Ascending aorta (tissue), 2 donors: ENCODE measurements at regions of chr10 and their contacts with region 1.

Region 1: DNA sequence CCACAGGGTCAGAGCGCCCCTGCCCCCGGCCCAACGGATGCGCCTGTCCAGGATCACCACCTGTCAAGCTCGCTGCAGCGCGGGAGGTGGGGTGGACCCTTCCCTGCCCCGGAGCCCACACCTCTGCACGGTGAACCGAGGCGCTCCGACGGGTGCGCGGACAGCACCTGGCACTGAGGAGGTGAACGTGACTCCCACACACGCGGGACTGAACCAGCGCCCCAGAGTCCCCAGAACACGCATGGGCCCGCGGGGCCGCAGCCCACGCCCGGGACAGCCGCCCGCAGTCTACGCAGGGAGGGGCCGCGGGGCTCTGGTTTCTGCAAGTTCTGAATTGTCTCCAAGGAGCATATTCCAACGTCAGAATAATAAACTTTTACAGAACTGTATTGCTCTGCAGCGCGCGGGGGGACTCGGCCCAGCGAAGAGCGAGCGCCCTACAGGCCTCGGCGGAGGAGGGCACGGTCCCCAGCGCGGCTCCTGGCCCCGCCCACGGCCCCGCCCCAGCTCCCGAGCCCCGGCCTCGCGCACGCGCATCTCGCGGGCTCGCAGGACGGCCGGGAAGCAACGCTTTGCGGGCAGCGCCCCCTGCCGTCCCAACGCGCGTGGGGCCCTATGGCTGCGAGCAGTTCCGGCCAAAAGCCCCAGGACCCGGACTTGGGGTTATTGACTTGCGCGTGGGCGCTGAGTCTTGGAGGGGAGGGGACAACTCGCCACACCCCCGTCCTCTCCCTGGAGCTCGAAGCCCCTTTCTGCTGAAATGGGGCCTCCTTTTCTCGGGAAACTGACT is 29.7 kb downstream of the OAT start:
- DNase-seq: peak; percentile 51 to 93
- H3K4me3 ChIP-seq: peak overlapping the region; percentile 51 to 61
- H3K27ac ChIP-seq: no peak overlapping the region
- H3K4me1 ChIP-seq: peaks cover 4 to 17% of the 10 kb centered on the region in 2 donors
- H3K27me3 ChIP-seq: no peaks in the 10 kb centered on the region
- CTCF ChIP-seq: peak; percentile 84 to 97 (median 91)

Region 2: GRCh38 chr10:123582084-123582989 is 806.7 kb before region 1 on chr10:
- intact Hi-C with region 1: loop called (anchors 10 kb)
- DNase-seq: peak; percentile 39 to 86
- H3K4me3 ChIP-seq: no peak overlapping the region
- H3K27ac ChIP-seq: no peak overlapping the region
- H3K4me1 ChIP-seq: peaks cover 3 to 10% of the 10 kb centered on the region in 2 donors
- H3K27me3 ChIP-seq: no peaks in the 10 kb centered on the region
- CTCF ChIP-seq: peak; percentile 73 to 90 (median 85)

Region 3: GRCh38 chr10:123721430-123722257 is 667.4 kb before region 1 on chr10:
- intact Hi-C with region 1: no loop called
- DNase-seq: no peak
- H3K4me3 ChIP-seq: no peak overlapping the region
- H3K27ac ChIP-seq: no peak overlapping the region
- H3K4me1 ChIP-seq: peaks cover 0 to 2% of the 10 kb centered on the region in 2 donors
- H3K27me3 ChIP-seq: no peaks in the 10 kb centered on the region
- CTCF ChIP-seq: no peak

Region 4: GRCh38 chr10:123994417-123995081 is 394.5 kb before region 1 on chr10:
- intact Hi-C with region 1: loop called (anchors 1 kb)
- DNase-seq: peak in 1 of 2 donors; percentile 92
- H3K4me3 ChIP-seq: peak overlapping the region; percentile 23 to 56
- H3K27ac ChIP-seq: no peak overlapping the region
- H3K4me1 ChIP-seq: peaks cover 3 to 8% of the 10 kb centered on the region in 2 donors
- H3K27me3 ChIP-seq: peaks cover 14% of the 10 kb centered on the region
- CTCF ChIP-seq: peak; percentile 98 to 100 (median 98)

Region 5: GRCh38 chr10:124025660-124026588 is 363.1 kb before region 1 on chr10:
- intact Hi-C with region 1: loop called (anchors 1 kb)
- DNase-seq: no peak
- H3K4me3 ChIP-seq: no peak overlapping the region
- H3K27ac ChIP-seq: no peak overlapping the region
- H3K4me1 ChIP-seq: peaks cover 0 to 4% of the 10 kb centered on the region in 2 donors
- H3K27me3 ChIP-seq: no peaks in the 10 kb centered on the region
- CTCF ChIP-seq: peak; percentile 51 to 67 (median 61)

Region 6: DNA sequence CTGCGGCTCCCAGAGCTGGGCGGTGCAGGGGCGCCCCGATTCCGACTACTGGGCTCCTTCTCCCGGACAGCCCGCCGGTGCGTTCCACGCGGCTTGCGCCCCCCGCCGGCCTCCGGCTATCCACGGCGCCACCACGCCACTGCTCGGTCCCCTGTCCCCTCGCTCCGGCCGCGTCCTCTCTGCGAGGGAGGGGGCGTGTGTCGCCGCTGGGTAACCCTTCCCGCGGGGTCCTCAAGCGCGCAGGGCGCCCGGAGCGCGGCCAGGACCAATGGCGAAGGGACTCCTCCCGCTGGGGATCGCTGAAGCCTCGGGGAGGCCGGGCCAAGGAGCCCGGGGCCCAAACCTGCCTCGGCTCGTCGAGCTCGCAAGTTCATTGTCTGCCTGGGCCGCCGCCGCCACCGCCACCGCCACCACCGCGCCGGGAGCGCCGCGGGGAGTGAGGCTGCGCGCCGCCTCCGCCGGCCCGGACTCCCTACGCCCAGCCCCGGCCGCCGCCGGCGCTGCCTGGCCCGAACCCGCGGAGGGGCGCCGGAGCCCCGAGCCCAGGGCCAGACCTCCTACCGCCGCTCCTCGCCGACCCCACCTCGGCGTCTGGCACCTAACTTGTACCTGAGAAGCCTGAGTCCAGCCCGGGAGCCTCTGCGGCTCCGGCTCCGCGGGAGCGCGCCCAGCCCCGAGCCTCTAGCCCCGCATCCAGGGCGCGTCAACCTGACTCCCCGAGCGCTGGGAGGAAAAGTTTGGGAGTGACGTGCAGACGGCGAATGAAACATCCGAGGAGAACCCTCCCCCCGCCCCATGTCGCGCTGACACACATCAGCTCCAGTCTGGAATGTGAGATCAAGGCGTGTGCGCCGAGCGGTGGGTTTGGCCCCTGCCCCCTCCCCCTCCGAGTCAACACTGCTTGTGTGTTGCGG is 295.9 kb before region 1 on chr10 and contains the start of gene CHST15:
- intact Hi-C with region 1: loop called (anchors 1 kb)
- DNase-seq: peak in 1 of 2 donors; percentile 80
- H3K4me3 ChIP-seq: peak within 1 kb of the TSS; percentile 73 to 79
- H3K27ac ChIP-seq: peak within 1 kb of the TSS; percentile 87 to 88
- H3K4me1 ChIP-seq: peaks cover 0 to 19% of the 10 kb centered on the region in 2 donors
- H3K27me3 ChIP-seq: no peaks in the 10 kb centered on the region
- CTCF ChIP-seq: peak in 2 of 3 experiments; percentile 16 to 38
- total RNA-seq, gene CHST15: 20.4 TPM